ENCODE measurements at regions of chr12 and their contacts with region 1.

Region 1: GRCh38 chr12:120784804-120785203 is 59.2 kb downstream of the ACADS start:
- DNase-seq: no peak
- ATAC-seq: no peak
- H3K4me3 ChIP-seq: no peak overlapping the region
- H3K4me3 Mint-ChIP-seq: no peak overlapping the region
- H3K27ac ChIP-seq: no peak overlapping the region
- H3K27ac Mint-ChIP-seq: peak overlapping the region in 2 of 9 donors; percentile 53 to 79
- H3K4me1 ChIP-seq: peaks cover 5% of the 10 kb centered on the region in 2 donors
- H3K4me1 Mint-ChIP-seq: peaks cover 9 to 57% (median 40%) of the 10 kb centered on the region in 7 donors
- H3K27me3 ChIP-seq: no peaks in the 10 kb centered on the region
- H3K27me3 Mint-ChIP-seq: no peaks in the 10 kb centered on the region

Region 2: DNA sequence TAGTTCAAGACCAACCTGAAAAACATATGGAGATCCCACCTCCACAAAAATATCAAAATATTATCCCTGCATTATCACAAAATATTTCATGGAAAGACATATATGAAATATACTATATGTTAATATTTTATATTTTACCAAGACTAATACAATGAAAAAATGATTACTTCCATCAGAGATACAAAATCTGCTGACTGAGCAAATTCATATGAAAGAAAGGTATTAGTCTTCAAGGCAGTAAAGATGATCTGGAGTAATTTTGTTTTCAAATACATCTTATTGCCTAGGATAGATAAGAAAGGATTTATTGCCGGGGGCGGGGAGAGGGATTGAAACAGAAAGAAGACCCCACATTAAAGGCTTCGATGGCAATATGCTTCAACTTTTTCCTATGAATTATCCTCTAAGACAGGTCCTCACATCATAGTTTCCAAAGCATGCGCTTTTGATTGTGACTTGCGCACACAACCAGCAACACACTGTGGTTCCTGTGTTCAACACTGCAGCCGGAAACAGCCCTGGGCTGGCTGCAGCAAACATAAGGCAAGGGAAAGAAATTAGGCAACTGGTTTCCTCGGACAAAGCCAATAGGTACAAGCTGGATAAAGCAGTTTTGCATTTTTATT is 36.2 kb after region 1 on chr12:
- CTCF ChIA-PET with region 1: no interaction called
- POLR2A ChIA-PET with region 1: no interaction called
- intact Hi-C with region 1: loop called in 1 of 2 experiments (anchors 5 kb)
- DNase-seq: peak in 5 of 9 donors; percentile 15 to 40 (median 30)
- ATAC-seq: no peak
- H3K4me3 ChIP-seq: no peak overlapping the region
- H3K4me3 Mint-ChIP-seq: peak overlapping the region; percentile 13 to 70 (median 54)
- H3K27ac ChIP-seq: no peak overlapping the region
- H3K27ac Mint-ChIP-seq: peak overlapping the region in 5 of 9 donors; percentile 32 to 70 (median 48)
- H3K4me1 ChIP-seq: peaks cover 0 to 14% of the 10 kb centered on the region in 2 donors
- H3K4me1 Mint-ChIP-seq: peaks cover 22 to 67% (median 64%) of the 10 kb centered on the region in 7 donors
- H3K27me3 ChIP-seq: no peaks in the 10 kb centered on the region
- H3K27me3 Mint-ChIP-seq: no peaks in the 10 kb centered on the region